MCF 10A (cell line): ENCODE measurements at regions of chr13 and their contacts with region 1.

Region 1: GRCh38 chr13:41061075-41061913 is at the start of gene WBP4:
- DNase-seq: peak; percentile 97
- H3K4me3 Mint-ChIP-seq: peak within 1 kb of the TSS; percentile 99
- H3K27ac Mint-ChIP-seq: peak within 1 kb of the TSS; percentile 99
- H3K4me1 Mint-ChIP-seq: peaks cover 25% of the 10 kb centered on the region
- H3K27me3 Mint-ChIP-seq: no peaks in the 10 kb centered on the region
- CTCF ChIP-seq: no peak
- total RNA-seq, gene WBP4: 14.7 and 16.0 TPM in 2 replicates

Region 2: GRCh38 chr13:40770934-40771618 is 290.2 kb before region 1 on chr13 and contains the start of gene MRPS31:
- CTCF ChIA-PET with region 1: no interaction called
- POLR2A ChIA-PET with region 1: interaction called, 12 read pairs
- intact Hi-C with region 1: no loop called
- DNase-seq: peak; percentile 94
- H3K4me3 Mint-ChIP-seq: peak within 1 kb of the TSS; percentile 94
- H3K27ac Mint-ChIP-seq: peak within 1 kb of the TSS; percentile 91
- H3K4me1 Mint-ChIP-seq: peaks cover 9% of the 10 kb centered on the region
- H3K27me3 Mint-ChIP-seq: no peaks in the 10 kb centered on the region
- CTCF ChIP-seq: no peak
- total RNA-seq, gene MRPS31: 19.2 and 19.4 TPM in 2 replicates

Region 3: GRCh38 chr13:40922437-40923040 is 138.8 kb before region 1 on chr13:
- CTCF ChIA-PET with region 1: interaction called, 4 read pairs
- POLR2A ChIA-PET with region 1: interaction called, 17 read pairs
- intact Hi-C with region 1: loop called (anchors 5 kb)
- DNase-seq: no peak
- H3K4me3 Mint-ChIP-seq: peak overlapping the region; percentile 87
- H3K27ac Mint-ChIP-seq: peak overlapping the region; percentile 35
- H3K4me1 Mint-ChIP-seq: peaks cover 9% of the 10 kb centered on the region
- H3K27me3 Mint-ChIP-seq: no peaks in the 10 kb centered on the region
- CTCF ChIP-seq: no peak

Region 4: DNA sequence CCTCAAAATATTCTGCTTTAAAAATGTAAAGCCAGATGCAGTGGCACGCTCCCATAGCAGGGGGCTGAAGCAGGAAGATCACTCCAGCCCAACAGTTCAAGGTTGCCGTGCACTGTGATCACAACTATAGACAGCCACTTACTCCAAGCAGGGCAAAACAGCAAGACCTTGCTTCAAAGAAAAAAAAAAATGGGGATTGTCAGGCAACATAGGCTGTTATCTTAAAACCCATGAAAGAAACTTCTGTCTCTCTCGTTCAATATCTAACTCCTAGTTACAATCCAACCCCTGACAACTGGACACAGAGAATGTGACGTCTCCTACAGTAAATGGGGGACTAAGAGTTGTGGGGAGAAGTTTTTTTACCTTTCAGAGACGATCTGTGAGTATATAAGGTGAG is 59.6 kb before region 1 on chr13:
- CTCF ChIA-PET with region 1: no interaction called
- POLR2A ChIA-PET with region 1: interaction called, 14 read pairs
- intact Hi-C with region 1: no loop called
- DNase-seq: no peak
- H3K4me3 Mint-ChIP-seq: no peak overlapping the region
- H3K27ac Mint-ChIP-seq: no peak overlapping the region
- H3K4me1 Mint-ChIP-seq: peaks cover 41% of the 10 kb centered on the region
- H3K27me3 Mint-ChIP-seq: no peaks in the 10 kb centered on the region
- CTCF ChIP-seq: no peak

Region 5: GRCh38 chr13:41019011-41019487 is 42.2 kb before region 1 on chr13 and contains the start of gene ELF1:
- CTCF ChIA-PET with region 1: interaction called, 5 read pairs
- POLR2A ChIA-PET with region 1: interaction called, 283 read pairs
- intact Hi-C with region 1: loop called (anchors 2 kb)
- DNase-seq: peak; percentile 91
- H3K4me3 Mint-ChIP-seq: peak within 1 kb of the TSS; percentile 77
- H3K27ac Mint-ChIP-seq: peak within 1 kb of the TSS; percentile 99
- H3K4me1 Mint-ChIP-seq: peaks cover 33% of the 10 kb centered on the region
- H3K27me3 Mint-ChIP-seq: no peaks in the 10 kb centered on the region
- CTCF ChIP-seq: no peak
- total RNA-seq, gene ELF1: 73.7 and 82.1 TPM in 2 replicates

Region 6: DNA sequence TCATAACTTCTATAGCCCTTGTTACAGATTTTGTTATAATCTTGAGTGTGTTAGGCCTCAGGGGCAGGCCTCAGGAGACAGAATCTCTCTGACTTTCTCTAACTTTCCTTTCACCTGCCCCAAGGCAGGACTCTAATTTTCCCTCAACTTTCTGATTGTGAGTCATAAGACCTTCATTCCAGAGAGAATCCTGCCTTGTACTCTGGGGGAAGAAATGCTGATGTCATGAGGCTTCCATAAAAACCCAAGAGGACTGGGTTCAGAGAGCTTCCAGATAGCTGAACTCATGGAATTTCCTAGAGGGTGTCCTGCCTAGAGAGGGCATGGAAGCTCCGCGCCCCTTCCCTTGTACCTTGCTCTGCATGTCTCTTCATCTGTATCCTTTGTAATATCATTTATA is 76.7 kb after region 1 on chr13:
- CTCF ChIA-PET with region 1: no interaction called
- POLR2A ChIA-PET with region 1: interaction called, 53 read pairs
- intact Hi-C with region 1: loop called (anchors 2 kb)
- DNase-seq: peak; percentile 84
- H3K4me3 Mint-ChIP-seq: no peak overlapping the region
- H3K27ac Mint-ChIP-seq: peak overlapping the region; percentile 86
- H3K4me1 Mint-ChIP-seq: peaks cover 41% of the 10 kb centered on the region
- H3K27me3 Mint-ChIP-seq: no peaks in the 10 kb centered on the region
- CTCF ChIP-seq: no peak

Region 7: DNA sequence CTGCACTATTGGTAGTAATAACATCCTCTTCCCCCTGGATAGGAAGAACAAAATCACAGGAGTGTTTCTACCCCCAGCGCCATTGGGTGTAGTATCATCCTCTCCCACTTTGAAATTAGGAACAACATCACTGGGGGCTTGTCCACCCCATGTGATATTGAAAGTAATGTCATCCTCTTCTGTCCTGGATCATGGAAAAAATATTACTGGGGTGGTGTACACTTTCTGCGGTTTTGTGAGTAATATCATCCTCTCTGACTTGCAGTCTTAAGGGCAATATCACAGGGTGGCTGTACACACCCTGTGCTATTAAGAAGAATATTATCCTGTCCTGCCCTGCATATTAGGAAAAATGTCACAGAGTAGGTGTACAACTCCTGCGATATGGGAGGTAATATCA is 391.2 kb after region 1 on chr13:
- CTCF ChIA-PET with region 1: no interaction called
- POLR2A ChIA-PET with region 1: no interaction called
- intact Hi-C with region 1: no loop called
- DNase-seq: no peak
- H3K4me3 Mint-ChIP-seq: no peak overlapping the region
- H3K27ac Mint-ChIP-seq: no peak overlapping the region
- H3K4me1 Mint-ChIP-seq: no peaks in the 10 kb centered on the region
- H3K27me3 Mint-ChIP-seq: no peaks in the 10 kb centered on the region
- CTCF ChIP-seq: no peak

Region 8: GRCh38 chr13:41470196-41470595 is 408.9 kb after region 1 on chr13:
- CTCF ChIA-PET with region 1: no interaction called
- POLR2A ChIA-PET with region 1: no interaction called
- intact Hi-C with region 1: no loop called
- DNase-seq: no peak
- H3K4me3 Mint-ChIP-seq: no peak overlapping the region
- H3K27ac Mint-ChIP-seq: no peak overlapping the region
- H3K4me1 Mint-ChIP-seq: peaks cover 12% of the 10 kb centered on the region
- H3K27me3 Mint-ChIP-seq: no peaks in the 10 kb centered on the region
- CTCF ChIP-seq: no peak

Region 9: GRCh38 chr13:41691274-41691673 is 630.0 kb after region 1 on chr13:
- CTCF ChIA-PET with region 1: no interaction called
- POLR2A ChIA-PET with region 1: no interaction called
- intact Hi-C with region 1: no loop called
- DNase-seq: peak; percentile 36
- H3K4me3 Mint-ChIP-seq: no peak overlapping the region
- H3K27ac Mint-ChIP-seq: no peak overlapping the region
- H3K4me1 Mint-ChIP-seq: peaks cover 15% of the 10 kb centered on the region
- H3K27me3 Mint-ChIP-seq: no peaks in the 10 kb centered on the region
- CTCF ChIP-seq: no peak

Region 10: DNA sequence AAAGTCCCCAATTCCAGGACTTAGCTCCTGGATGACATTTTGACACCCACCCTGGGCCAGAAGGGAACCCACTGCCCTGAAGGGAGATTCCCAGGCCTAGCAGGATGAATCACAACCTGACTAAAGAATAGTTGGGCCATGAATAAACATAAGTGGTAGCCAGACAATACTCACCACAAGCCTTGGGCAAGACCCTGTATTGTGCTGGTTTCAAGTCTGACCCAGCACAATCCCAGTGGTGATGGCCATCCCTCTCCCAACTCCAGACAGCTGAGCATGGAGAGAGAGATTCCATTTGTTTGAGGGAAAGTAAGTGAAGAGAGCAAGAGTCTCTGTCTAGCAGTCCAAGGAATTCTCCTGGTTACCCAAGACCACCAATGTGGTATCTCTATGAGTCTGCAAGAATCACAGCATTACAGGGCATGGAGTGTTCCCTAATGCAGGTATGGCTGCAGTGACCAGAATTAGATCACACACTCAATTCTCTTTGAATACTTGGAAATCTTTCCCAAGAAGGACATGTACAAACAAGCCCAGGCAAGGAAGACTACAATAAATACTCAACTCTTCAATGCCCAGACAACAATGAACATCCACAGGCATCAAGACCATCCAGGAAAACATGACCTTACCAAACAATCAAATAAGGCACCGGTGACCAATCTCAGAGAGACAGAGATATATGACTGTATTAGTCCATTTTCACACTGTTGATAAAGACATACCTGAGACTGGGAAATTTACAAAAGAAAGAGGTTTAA is 741.6 kb after region 1 on chr13:
- CTCF ChIA-PET with region 1: no interaction called
- POLR2A ChIA-PET with region 1: no interaction called
- intact Hi-C with region 1: no loop called
- DNase-seq: peak; percentile 64
- H3K4me3 Mint-ChIP-seq: no peak overlapping the region
- H3K27ac Mint-ChIP-seq: peak overlapping the region; percentile 97
- H3K4me1 Mint-ChIP-seq: peaks cover 9% of the 10 kb centered on the region
- H3K27me3 Mint-ChIP-seq: no peaks in the 10 kb centered on the region
- CTCF ChIP-seq: no peak